AG04450 (cell line): ENCODE measurements at regions of chr9 and their contacts with region 1.

Region 1: DNA sequence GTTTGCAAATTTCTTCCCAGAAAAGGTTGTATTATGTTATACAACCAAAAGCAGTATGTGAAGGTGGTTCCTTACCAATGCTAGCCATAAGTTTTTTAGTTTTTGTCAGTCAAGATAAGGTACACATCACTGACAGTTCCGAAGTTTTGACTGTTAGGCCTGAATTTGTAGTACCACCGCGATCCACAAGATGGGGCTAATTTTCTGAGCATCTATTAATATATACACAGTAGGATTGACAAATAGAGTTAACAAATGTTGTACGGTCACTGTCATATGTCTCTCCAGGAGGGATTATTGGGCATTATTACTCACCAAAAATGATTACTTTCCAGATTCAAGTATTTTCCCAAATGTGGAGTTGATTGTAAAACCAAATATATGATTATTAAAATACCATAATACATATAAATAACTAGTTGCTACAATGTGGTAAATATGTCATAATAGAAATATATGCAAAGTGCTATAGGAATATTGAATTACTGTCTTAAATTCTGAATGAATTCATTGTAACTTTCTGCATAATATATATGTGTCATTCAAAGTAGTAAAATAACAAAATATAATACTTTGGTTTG is 28.4 kb upstream of the LRRC19 start:
- DNase-seq: peak; percentile 18
- H3K4me3 ChIP-seq: no peak overlapping the region
- H3K27ac ChIP-seq: no peak overlapping the region
- H3K27me3 ChIP-seq: no peaks in the 10 kb centered on the region
- CTCF ChIP-seq: peak; percentile 82

Region 2: DNA sequence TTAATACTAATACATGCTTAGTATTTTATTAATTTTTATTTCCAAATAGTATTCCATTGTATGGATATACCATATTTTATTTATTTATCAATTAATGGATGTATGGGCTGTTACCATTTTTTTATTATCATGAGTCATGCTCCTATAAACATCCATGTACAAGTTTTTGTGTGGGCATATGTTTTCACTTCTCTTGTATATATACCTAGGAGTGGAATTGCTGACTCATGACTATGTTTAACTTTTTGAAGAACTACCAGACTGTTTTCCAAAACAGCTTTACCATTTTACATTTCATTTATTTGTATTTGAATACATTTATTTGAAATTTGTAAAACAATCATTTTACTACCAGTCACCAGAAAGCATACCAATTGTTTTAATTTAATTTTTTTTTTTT is 14.3 kb before region 1 on chr9:
- CTCF ChIA-PET with region 1: interaction called, 10 read pairs
- POLR2A ChIA-PET with region 1: interaction called, 4 read pairs
- DNase-seq: peak; percentile 63
- H3K4me3 ChIP-seq: no peak overlapping the region
- H3K27ac ChIP-seq: no peak overlapping the region
- H3K27me3 ChIP-seq: no peaks in the 10 kb centered on the region
- CTCF ChIP-seq: no peak

Region 3: DNA sequence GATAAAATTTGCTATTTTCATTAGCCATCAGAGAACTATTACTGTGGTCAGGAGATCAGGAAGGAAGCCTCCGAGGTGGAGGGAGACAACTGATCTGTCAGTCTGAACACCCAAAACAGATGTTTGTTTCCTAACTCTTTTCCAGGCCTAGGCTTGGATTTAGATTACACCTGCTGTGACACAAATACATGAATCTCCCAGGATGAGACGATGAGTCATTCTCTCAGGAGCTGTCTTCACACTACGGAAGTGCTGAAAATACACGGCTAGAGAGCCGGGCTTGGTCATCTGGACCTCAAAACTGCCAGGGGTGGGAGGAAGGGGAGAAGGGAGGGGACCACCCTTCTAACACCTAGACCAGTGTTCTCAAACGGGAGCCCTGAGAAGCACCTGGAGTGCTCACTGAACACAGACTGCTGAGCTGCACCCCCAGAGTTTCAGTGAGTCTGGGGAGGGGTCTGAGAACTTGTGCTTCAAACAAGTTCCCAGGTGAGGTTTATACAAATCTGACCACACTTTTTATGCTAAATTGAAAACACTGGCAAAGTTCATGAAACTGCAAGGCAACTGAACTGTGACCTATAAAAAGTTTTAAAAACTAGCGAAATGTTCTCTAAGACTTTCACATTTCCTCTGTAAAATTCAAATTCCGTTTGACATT is 343.4 kb after region 1 on chr9:
- CTCF ChIA-PET with region 1: no interaction called
- POLR2A ChIA-PET with region 1: no interaction called
- DNase-seq: no peak
- H3K4me3 ChIP-seq: no peak overlapping the region
- H3K27ac ChIP-seq: no peak overlapping the region
- H3K27me3 ChIP-seq: peaks cover 4% of the 10 kb centered on the region
- CTCF ChIP-seq: no peak